ENCODE measurements at regions of chr2 and their contacts with region 1.

Region 1: GRCh38 chr2:71545572-71546274 is 92.4 kb downstream of the DYSF start:
- DNase-seq: peak in 2 of 5 donors; percentile 30 to 45
- ATAC-seq: peak; percentile 60 to 76 (median 68)
- H3K4me3 ChIP-seq: peak overlapping the region in 6 of 12 donors; percentile 6 to 27 (median 20)
- H3K27ac ChIP-seq: peak overlapping the region in 11 of 12 donors; percentile 33 to 71 (median 63)
- H3K4me1 ChIP-seq: peaks cover 0 to 15% (median 8%) of the 10 kb centered on the region in 12 donors
- H3K27me3 ChIP-seq: no peaks in the 10 kb centered on the region
- CTCF ChIP-seq: peak; percentile 51 to 81 (median 73)
- POLR2A ChIP-seq: no peak

Region 2: DNA sequence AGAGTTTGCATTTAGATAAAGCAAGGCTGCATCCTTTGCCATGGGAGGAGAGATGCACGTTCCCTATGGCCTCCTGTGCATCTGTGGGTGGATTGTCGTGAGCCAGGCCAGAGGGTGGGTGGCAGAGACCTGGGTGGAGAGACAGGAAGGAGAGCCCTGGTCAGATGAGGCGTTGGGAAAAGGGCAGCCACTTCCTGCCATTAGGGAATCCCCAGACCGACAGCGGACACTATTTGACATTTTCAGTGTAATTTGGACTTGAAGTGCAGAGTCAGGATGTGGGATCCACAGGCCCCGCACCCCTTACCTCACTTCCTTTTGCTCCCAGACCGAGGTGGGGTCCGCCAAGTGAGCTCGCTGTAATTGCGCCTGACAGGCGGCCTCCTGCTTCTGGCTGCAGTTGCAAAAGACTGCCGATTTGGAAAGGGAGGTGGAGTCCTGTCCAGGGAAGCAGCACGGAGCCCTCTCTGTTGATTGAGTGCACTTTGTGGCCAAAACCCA is 57.6 kb after region 1 on chr2:
- intact Hi-C with region 1: loop called in 3 of 10 experiments (anchors 5 to 10 kb)
- DNase-seq: peak in 4 of 5 donors; percentile 30 to 53 (median 44)
- ATAC-seq: peak; percentile 9 to 72 (median 45)
- H3K4me3 ChIP-seq: peak overlapping the region in 1 of 12 donors; percentile 7
- H3K27ac ChIP-seq: peak overlapping the region in 10 of 12 donors; percentile 9 to 83 (median 59)
- H3K4me1 ChIP-seq: peaks cover 7 to 39% (median 20%) of the 10 kb centered on the region in 12 donors
- H3K27me3 ChIP-seq: no peaks in the 10 kb centered on the region
- CTCF ChIP-seq: no peak
- POLR2A ChIP-seq: no peak

Region 3: GRCh38 chr2:71798266-71799012 is 252.7 kb after region 1 on chr2:
- intact Hi-C with region 1: loop called (anchors 2 to 10 kb)
- DNase-seq: peak in 2 of 5 donors; percentile 22 to 33
- ATAC-seq: peak in 3 of 4 donors; percentile 35 to 65 (median 56)
- H3K4me3 ChIP-seq: no peak overlapping the region
- H3K27ac ChIP-seq: no peak overlapping the region
- H3K4me1 ChIP-seq: peaks cover 0 to 19% (median 1%) of the 10 kb centered on the region in 12 donors
- H3K27me3 ChIP-seq: no peaks in the 10 kb centered on the region
- CTCF ChIP-seq: peak; percentile 67 to 84 (median 74)
- POLR2A ChIP-seq: no peak

Region 4: DNA sequence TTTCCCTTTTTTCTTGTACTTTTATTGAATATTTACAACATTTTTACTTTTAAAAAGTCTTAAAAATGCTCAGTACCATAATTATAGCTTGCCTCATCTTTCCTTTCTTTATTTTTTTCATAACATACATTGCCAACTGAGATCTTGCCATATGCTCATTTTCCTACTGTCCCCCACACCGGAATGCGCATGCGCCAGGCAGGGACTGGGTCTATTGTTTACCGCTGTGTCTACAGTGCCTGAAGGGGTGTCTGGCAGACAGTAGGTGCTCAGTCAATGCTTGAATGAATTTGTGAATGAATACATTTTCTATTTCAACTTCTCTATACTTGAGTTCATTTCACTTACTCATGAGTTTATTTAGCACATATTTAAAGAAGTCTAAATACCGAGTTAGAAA is 443.9 kb after region 1 on chr2:
- intact Hi-C with region 1: loop called in 2 of 10 experiments (anchors 5 to 10 kb)
- DNase-seq: no peak
- ATAC-seq: no peak
- H3K4me3 ChIP-seq: no peak overlapping the region
- H3K27ac ChIP-seq: no peak overlapping the region
- H3K4me1 ChIP-seq: no peaks in the 10 kb centered on the region
- H3K27me3 ChIP-seq: no peaks in the 10 kb centered on the region
- CTCF ChIP-seq: no peak
- POLR2A ChIP-seq: no peak

Region 5: DNA sequence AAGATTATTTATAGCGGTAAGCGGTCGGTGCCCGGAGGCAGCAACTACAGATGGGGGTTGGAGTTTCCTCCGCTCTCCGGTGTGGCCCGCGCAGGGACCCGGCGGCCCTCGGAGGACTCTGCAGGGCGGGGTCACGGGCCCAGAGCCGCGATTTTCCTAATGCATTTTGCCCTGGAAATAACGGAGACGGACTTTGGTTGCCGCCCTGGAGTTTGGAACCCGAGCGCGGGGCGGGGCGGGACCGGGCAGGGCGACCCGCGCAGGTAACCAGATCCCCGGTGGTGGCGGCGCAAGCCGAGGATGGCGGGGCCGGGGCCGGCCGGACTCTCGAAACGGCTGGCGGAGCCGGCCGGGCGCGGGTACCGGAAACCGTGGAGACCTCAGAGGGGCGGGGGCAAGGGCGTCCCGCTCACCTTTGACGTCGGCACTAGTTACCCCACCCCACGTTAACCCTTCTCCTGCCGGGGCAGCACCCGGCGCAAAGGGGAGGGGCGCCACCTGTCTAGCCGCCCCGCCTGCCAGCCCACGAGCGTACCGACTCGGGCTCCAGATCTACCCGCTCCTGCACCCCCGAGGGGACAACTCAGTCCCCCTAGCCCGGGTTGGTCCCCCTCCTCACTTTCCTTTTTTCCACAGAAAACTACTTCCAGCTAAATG is 599.0 kb after region 1 on chr2:
- intact Hi-C with region 1: loop called in 3 of 10 experiments (anchors 2 to 5 kb)
- DNase-seq: peak; percentile 61 to 84 (median 67)
- ATAC-seq: peak in 3 of 4 donors; percentile 70 to 79 (median 79)
- H3K4me3 ChIP-seq: peak overlapping the region; percentile 35 to 67 (median 58)
- H3K27ac ChIP-seq: peak overlapping the region in 8 of 12 donors; percentile 15 to 82 (median 67)
- H3K4me1 ChIP-seq: peaks cover 7 to 74% (median 63%) of the 10 kb centered on the region in 12 donors
- H3K27me3 ChIP-seq: peaks cover 15 to 70% (median 41%) of the 10 kb centered on the region in 9 donors
- CTCF ChIP-seq: no peak
- POLR2A ChIP-seq: no peak

Region 6: GRCh38 chr2:72579591-72580180 is 1034.0 kb after region 1 on chr2:
- intact Hi-C with region 1: loop called in 5 of 10 experiments (anchors 5 to 10 kb)
- DNase-seq: no peak
- ATAC-seq: peak in 2 of 4 donors; percentile 47 to 75
- H3K4me3 ChIP-seq: no peak overlapping the region
- H3K27ac ChIP-seq: no peak overlapping the region
- H3K4me1 ChIP-seq: peaks cover 0 to 31% (median 12%) of the 10 kb centered on the region in 12 donors
- H3K27me3 ChIP-seq: no peaks in the 10 kb centered on the region
- CTCF ChIP-seq: peak; percentile 44 to 83 (median 69)
- POLR2A ChIP-seq: no peak